Tibial artery (tissue), 4 donors: ENCODE measurements at regions of chr9 and their contacts with region 1.

Region 1: GRCh38 chr9:98263482-98264357 is 8.3 kb upstream of the TBC1D2 start:
- DNase-seq: peak; percentile 71 to 81
- H3K4me3 ChIP-seq: no peak overlapping the region
- H3K27ac ChIP-seq: no peak overlapping the region
- H3K4me1 ChIP-seq: no peaks in the 10 kb centered on the region
- H3K27me3 ChIP-seq: peaks cover 0 to 10% of the 10 kb centered on the region in 2 donors
- CTCF ChIP-seq: peak; percentile 88 to 90

Region 2: GRCh38 chr9:98204692-98205091 is 59.0 kb before region 1 on chr9:
- intact Hi-C with region 1: loop called (anchors 2 kb)
- DNase-seq: no peak
- H3K4me3 ChIP-seq: no peak overlapping the region
- H3K27ac ChIP-seq: no peak overlapping the region
- H3K4me1 ChIP-seq: peaks cover 0 to 7% (median 0%) of the 10 kb centered on the region in 4 donors
- H3K27me3 ChIP-seq: no peaks in the 10 kb centered on the region
- CTCF ChIP-seq: no peak